ENCODE measurements at regions of chr22 and their contacts with region 1.

Region 1: DNA sequence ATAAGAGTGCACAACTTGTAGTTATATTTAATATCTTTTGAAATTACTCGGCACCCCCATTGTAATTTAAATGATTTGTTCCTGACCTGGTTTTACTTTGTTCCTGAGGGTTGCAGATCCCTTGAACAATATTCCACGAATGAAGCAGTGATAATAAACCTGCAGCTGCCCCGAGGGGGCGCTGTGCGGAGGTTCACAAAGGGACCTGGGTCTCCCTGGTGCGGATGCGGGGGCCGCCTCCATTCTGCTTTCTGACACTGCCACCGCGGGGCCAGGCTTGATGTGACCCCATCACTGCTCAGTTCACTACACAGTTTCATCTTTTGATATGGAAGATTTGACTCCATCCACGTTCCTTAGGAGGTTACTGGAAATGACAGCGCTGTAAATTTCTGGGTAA is 62.9 kb upstream of the PRODH start:
- H3K4me3 ChIP-seq: no peak overlapping the region
- H3K27ac ChIP-seq: no peak overlapping the region
- H3K4me1 ChIP-seq: no peaks in the 10 kb centered on the region
- CTCF ChIP-seq: no peak

Region 2: DNA sequence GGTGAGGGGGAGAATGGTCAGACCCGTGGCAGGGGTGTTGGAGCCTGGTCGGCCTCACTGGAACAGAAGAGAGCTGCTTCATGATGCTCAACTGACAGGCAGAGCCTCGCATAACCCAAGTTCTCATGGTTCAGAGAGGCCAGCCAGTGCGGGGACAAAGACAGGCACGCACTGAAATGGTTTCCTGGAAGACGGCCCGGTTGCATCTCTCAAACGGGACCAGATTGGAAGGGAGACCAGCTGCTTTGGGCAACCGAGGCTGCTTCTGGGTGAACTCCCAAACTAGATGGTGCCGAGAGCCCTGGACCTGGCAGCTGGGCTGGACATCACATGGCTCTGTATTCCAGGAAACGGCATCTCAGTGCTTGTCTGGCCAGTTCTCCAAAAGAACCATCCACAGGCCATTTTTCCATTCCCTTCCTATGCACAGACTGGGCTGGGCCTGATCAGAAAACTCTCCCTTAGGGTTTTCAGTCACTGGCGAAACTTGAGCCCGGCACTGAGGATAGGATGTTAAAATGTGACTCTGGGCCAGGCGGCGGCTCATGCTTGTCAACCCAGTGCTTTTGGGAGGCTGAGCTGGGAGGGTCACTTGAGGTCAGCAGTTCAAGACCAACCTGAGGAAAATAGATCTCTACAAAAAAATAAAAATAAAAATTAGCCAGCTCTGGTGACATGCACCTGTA is 17.2 kb after region 1 on chr22:
- CTCF ChIA-PET with region 1: interaction called, 10 read pairs
- POLR2A ChIA-PET with region 1: no interaction called
- H3K4me3 ChIP-seq: no peak overlapping the region
- H3K27ac ChIP-seq: no peak overlapping the region
- H3K4me1 ChIP-seq: no peaks in the 10 kb centered on the region
- CTCF ChIP-seq: no peak

Measured in HEK293 (cell line).